Right ventricle myocardium inferior (tissue), 1 donor: ENCODE measurements at regions of chr15 and their contacts with region 1.

Region 1: GRCh38 chr15:94844538-94845389 is 613.4 kb downstream of the MCTP2 start:
- DNase-seq: peak; percentile 78
- ATAC-seq: peak; percentile 76

Region 2: GRCh38 chr15:94670438-94671034 is 174.2 kb before region 1 on chr15:
- intact Hi-C with region 1: loop called (anchors 2 kb)
- DNase-seq: no peak
- ATAC-seq: no peak

Region 3: DNA sequence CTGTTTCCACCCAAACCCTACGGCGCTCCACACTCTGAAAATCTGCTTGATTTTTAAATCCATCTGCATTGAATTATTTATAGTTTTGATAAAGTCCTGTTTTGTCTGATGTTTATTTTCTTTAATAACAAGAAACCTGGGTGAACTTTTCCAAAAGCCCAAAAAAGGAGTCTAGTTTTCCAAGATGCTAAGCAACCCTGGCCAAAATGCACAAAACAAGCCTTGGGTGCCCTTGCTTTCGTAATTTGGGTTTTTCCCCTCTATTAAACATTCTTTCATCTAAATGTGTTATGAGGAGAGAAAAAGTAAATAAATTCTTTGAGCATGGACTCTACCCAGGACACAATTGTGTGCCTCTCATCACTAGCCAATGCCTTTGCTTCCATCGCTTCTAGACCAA is 144.6 kb before region 1 on chr15:
- intact Hi-C with region 1: loop called (anchors 10 kb)
- DNase-seq: no peak
- ATAC-seq: no peak

Region 4: GRCh38 chr15:95018888-95019545 is 174.3 kb after region 1 on chr15:
- intact Hi-C with region 1: loop called (anchors 5 kb)
- DNase-seq: no peak
- ATAC-seq: no peak